ENCODE measurements at regions of chr6 and their contacts with region 1.

Region 1: DNA sequence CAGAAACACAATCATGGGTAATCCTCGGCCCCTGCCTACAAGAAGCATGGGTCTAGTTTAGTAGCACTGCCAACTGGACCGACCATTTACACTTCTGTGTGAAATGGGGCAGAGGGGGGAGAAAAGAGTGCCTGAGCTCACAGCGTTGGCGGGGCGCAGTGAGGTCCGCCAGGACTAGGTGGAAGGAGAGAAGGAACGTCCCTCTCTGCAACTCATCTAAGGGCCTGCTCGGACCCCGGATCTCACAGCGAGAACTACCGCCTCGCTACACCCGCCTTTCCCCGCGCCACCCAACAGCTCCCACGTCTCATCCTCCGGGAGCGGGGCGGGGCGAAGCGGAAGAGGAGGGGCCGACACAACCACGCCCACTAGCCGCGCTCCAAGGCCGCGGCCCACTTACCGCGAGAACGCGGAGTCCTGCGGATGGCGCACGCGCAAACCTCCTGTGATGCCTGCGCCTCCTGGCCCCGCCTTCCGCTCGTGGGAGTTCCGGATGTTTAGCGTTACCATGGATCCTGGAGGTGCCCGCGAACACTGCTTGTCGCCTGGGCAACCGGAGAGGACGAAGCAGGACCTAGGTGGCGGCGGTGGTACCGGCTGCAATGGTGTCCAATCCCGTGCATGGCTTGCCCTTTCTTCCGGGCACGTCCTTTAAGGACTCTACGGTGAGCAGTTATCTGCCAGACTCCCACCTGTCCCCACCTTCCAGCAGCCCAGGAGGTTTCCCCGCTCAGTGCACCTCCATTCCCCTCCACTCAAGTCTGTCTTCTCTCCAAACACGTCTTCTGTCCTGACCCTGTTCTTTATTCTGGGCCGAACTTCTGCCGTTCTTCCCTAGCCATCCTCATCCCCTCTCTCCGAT is at the start of gene EFHC1:
- DNase-seq: peak; percentile 96 to 99
- H3K4me3 ChIP-seq: peak within 1 kb of the TSS; percentile 77 to 90 (median 88)
- H3K27ac ChIP-seq: peak within 1 kb of the TSS; percentile 78
- H3K4me1 ChIP-seq: peaks cover 0 to 4% (median 0%) of the 10 kb centered on the region in 4 experiments; a peak in 1 of 7 replicates
- H3K27me3 ChIP-seq: no peaks in the 10 kb centered on the region
- CTCF ChIP-seq: no peak
- EP300 ChIP-seq: no peak
- POLR2A ChIP-seq: peak; percentile 73 to 92
- RAD21 ChIP-seq: no peak
- total RNA-seq, gene EFHC1: 14.7 and 16.4 TPM in 2 replicates

Region 2: DNA sequence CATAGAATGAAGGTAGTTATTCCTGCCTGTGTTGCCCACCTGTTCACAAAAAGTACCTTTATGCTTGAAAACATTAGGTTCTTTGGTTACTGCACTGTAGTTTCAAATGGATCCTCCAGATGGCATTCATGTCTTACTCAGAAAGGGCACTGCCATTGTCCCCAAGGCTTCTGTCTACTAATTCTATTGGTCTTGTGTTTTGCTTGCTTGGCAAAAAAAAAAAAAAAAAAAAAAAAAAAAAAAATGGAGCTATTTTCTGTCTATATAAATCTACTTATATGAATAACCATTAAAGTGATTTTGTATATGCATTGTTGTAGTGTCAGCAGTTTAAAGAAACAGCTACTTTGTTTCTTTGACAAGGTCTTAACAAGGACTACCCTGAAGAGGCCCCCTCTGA is 12.6 kb before region 1 on chr6:
- CTCF ChIA-PET with region 1: interaction called, 18 read pairs
- POLR2A ChIA-PET with region 1: no interaction called
- DNase-seq: no peak
- H3K4me3 ChIP-seq: no peak overlapping the region
- H3K27ac ChIP-seq: no peak overlapping the region
- H3K4me1 ChIP-seq: no peaks in the 10 kb centered on the region
- H3K27me3 ChIP-seq: no peaks in the 10 kb centered on the region
- CTCF ChIP-seq: peak in 2 of 3 experiments; percentile 52 to 53; a peak in 3 of 4 replicates
- EP300 ChIP-seq: no peak
- POLR2A ChIP-seq: no peak
- RAD21 ChIP-seq: peak; percentile 78

Region 3: DNA sequence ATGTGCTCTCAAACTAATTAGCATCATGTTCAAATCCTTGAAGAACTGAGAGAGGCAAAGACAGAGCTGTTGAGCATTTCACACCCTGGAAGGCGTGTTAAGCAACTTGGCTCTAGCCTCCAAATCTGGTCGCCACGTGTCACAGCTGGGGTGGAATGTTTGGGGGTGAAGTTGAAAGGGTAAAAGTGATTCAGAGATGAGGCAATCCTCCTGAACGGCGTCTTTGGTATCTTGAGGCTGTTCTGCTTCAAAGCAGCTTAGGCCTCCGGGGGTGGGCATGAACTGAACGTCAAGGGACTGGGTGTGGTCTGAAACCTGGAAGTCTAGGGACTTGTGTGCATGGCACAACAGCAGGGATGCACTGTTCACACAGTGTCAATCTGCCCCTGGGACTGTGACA is 94.5 kb after region 1 on chr6:
- CTCF ChIA-PET with region 1: interaction called, 16 read pairs
- POLR2A ChIA-PET with region 1: interaction called, 3 read pairs
- DNase-seq: no peak
- H3K4me3 ChIP-seq: no peak overlapping the region
- H3K27ac ChIP-seq: no peak overlapping the region
- H3K4me1 ChIP-seq: peaks cover 7 to 28% (median 17%) of the 10 kb centered on the region in 4 experiments
- H3K27me3 ChIP-seq: no peaks in the 10 kb centered on the region
- CTCF ChIP-seq: no peak
- EP300 ChIP-seq: no peak
- POLR2A ChIP-seq: no peak
- RAD21 ChIP-seq: no peak

Region 4: GRCh38 chr6:52590152-52590931 is 170.3 kb after region 1 on chr6:
- CTCF ChIA-PET with region 1: interaction called, 21 read pairs
- POLR2A ChIA-PET with region 1: no interaction called
- DNase-seq: no peak
- H3K4me3 ChIP-seq: no peak overlapping the region
- H3K27ac ChIP-seq: no peak overlapping the region
- H3K4me1 ChIP-seq: peaks cover 0 to 8% (median under 1%) of the 10 kb centered on the region in 4 experiments; a peak in 3 of 7 replicates
- H3K27me3 ChIP-seq: no peaks in the 10 kb centered on the region
- CTCF ChIP-seq: peak in 1 of 3 experiments; percentile 9; a peak in 1 of 4 replicates
- EP300 ChIP-seq: no peak
- POLR2A ChIP-seq: no peak
- RAD21 ChIP-seq: peak; percentile 34 to 37

Region 5: GRCh38 chr6:52664186-52664990 is 244.3 kb after region 1 on chr6:
- CTCF ChIA-PET with region 1: interaction called, 86 read pairs
- POLR2A ChIA-PET with region 1: interaction called, 22 read pairs
- DNase-seq: peak; percentile 93
- H3K4me3 ChIP-seq: peak overlapping the region; percentile 66 to 76 (median 74)
- H3K27ac ChIP-seq: no peak overlapping the region
- H3K4me1 ChIP-seq: peaks cover 0 to 10% (median 5%) of the 10 kb centered on the region in 4 experiments; a peak in 3 of 7 replicates
- H3K27me3 ChIP-seq: peaks cover 0 to 10% (median 7%) of the 10 kb centered on the region in 4 experiments; a peak in 5 of 7 replicates
- CTCF ChIP-seq: no peak
- EP300 ChIP-seq: no peak
- POLR2A ChIP-seq: peak; percentile 90 to 95
- RAD21 ChIP-seq: no peak